ENCODE measurements at regions of chr19 and their contacts with region 1.

Region 1: GRCh38 chr19:12681074-12681951 is at the start of gene DHPS:
- DNase-seq: peak; percentile 79
- ATAC-seq: peak; percentile 89
- H3K4me3 ChIP-seq: peak within 1 kb of the TSS; percentile 57 to 72
- H3K27ac ChIP-seq: peak within 1 kb of the TSS; percentile 88
- H3K4me1 ChIP-seq: no peaks in the 10 kb centered on the region
- H3K27me3 ChIP-seq: no peaks in the 10 kb centered on the region
- CTCF ChIP-seq: no peak
- total RNA-seq, gene DHPS: 76.9 TPM

Region 2: DNA sequence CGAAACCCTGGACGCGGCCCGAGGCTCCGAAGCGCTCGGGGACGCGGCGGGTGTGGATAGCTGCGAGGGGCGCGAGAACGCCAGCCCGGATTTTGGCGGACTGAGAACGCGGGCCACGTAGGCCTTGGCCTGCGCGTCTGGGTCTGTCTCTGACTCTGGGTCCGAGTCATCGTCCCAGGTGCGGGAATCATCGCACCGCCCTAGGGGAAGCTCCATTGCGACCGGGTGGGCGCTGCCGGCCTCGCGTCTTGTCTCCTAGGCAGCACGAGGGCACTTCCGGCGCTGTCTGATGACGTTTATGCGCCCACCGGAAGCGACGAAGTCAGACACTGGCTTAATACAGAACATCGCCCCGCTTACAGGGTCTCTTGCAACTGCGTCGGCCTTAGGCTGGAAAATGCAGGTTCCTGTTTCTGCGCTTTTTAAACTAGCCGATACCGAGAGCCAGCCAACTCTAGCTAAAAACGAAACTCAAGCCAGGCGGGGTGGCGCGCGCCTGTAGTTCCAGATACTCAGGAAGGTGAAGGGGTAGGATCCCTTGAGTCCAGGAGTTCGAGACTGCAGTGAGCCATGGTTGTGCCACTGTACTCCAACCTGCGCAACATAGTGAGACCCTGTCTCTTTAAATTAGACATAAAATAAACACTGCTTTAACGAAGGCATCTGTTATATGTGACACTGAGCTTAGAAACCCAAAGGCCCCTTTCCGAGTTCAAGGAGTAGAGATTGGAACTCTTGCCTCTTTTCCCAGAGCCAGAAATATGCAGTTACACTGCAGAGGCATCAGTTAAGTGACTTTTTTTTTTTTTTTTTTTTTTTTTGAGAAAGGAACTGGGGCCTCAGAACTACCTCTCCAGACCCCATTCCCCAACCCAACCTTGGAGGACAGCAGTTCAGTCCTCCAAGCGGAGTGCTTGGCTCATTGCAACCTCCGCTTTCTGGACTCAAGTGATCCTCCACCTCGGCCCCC is 15.3 kb after region 1 on chr19 and contains the start of gene FBXW9:
- CTCF ChIA-PET with region 1: no interaction called
- POLR2A ChIA-PET with region 1: interaction called, 23 read pairs
- in situ Hi-C with region 1: no loop called
- intact Hi-C with region 1: no loop called
- DNase-seq: peak; percentile 61
- ATAC-seq: peak; percentile 88
- H3K4me3 ChIP-seq: peak within 1 kb of the TSS; percentile 60 to 69
- H3K27ac ChIP-seq: peak within 1 kb of the TSS; percentile 84
- H3K4me1 ChIP-seq: peaks cover 5% of the 10 kb centered on the region; the same call in 1 of the 2 replicates
- H3K27me3 ChIP-seq: no peaks in the 10 kb centered on the region
- CTCF ChIP-seq: no peak
- total RNA-seq, gene FBXW9: 12.4 TPM